ENCODE measurements at regions of chr17 and their contacts with region 1.

Region 1: DNA sequence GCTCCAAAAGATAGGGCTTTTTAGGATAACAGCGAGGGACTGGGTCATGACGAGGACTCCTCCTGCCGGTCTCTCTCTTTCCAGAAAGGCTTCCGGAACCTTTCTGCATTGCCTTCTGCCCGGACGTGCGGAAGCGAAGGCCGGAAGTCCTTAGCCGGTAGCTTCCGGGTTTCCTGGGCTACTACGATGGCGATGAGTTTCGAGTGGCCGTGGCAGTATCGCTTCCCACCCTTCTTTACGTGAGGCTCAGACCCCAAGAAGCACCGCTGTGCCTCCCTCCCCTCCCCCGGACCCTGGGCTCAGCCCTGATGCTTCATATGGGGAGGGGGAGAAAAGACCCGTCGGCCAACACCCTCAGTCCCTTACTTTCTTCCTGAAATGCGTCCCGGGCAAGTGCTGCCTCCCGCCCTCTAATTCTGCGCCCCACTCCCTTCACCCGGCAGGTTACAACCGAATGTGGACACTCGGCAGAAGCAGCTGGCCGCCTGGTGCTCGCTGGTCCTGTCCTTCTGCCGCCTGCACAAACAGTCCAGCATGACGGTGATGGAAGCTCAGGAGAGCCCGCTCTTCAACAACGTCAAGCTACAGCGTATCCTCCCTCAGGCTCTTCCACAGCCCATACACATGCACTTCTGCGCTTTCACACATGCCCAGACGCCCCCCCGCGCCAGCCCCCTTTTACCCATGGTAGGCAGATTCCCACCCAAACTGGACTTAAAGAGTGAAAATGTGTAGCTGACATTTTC is at the start of gene VPS25:
- DNase-seq: peak; percentile 53 to 86 (median 69)
- ATAC-seq: peak; percentile 96 to 99 (median 98)
- H3K4me3 ChIP-seq: peak within 1 kb of the TSS; percentile 91 to 100
- H3K4me3 Mint-ChIP-seq: peak within 1 kb of the TSS; percentile 98 to 99 (median 98)
- H3K27ac ChIP-seq: peak within 1 kb of the TSS; percentile 86
- H3K27ac Mint-ChIP-seq: peak within 1 kb of the TSS; percentile 97 to 98
- H3K4me1 ChIP-seq: peaks cover 2 to 18% of the 10 kb centered on the region in 2 experiments
- H3K4me1 Mint-ChIP-seq: peaks cover 25 to 31% (median 29%) of the 10 kb centered on the region in 3 donors
- H3K27me3 ChIP-seq: no peaks in the 10 kb centered on the region
- H3K27me3 Mint-ChIP-seq: peaks cover 0 to 2% of the 10 kb centered on the region in 2 donors
- total RNA-seq, gene VPS25: 34.7 to 42.5 (median 38.7) TPM

Region 2: GRCh38 chr17:42760652-42761581 is 12.5 kb before region 1 on chr17 and contains the start of gene RAMP2:
- CTCF ChIA-PET with region 1: interaction called, 6 to 10 read pairs
- POLR2A ChIA-PET with region 1: no interaction called
- DNase-seq: peak in 3 of 35 experiments; percentile 9 to 29 (median 20)
- ATAC-seq: peak; percentile 53 to 67 (median 61)
- H3K4me3 ChIP-seq: peak within 1 kb of the TSS; percentile 6 to 25
- H3K4me3 Mint-ChIP-seq: peak within 1 kb of the TSS; percentile 17 to 61 (median 51)
- H3K27ac ChIP-seq: no peak within 1 kb of the TSS
- H3K27ac Mint-ChIP-seq: no peak within 1 kb of the TSS
- H3K4me1 ChIP-seq: peaks cover 0 to 14% of the 10 kb centered on the region in 2 experiments
- H3K4me1 Mint-ChIP-seq: peaks cover 0 to 14% (median 9%) of the 10 kb centered on the region in 3 donors
- H3K27me3 ChIP-seq: peaks cover 7 to 65% of the 10 kb centered on the region in 2 experiments
- H3K27me3 Mint-ChIP-seq: peaks cover 55 to 71% of the 10 kb centered on the region in 2 donors
- total RNA-seq, gene RAMP2: not detected